OCI-LY7 (cell line): ENCODE measurements at regions of chr11 and their contacts with region 1.

Region 1: GRCh38 chr11:44611687-44612434 is 46.4 kb downstream of the CD82 start:
- DNase-seq: peak; percentile 23
- H3K4me3 ChIP-seq: no peak overlapping the region
- H3K27ac ChIP-seq: no peak overlapping the region
- H3K4me1 ChIP-seq: peaks cover 51% of the 10 kb centered on the region
- CTCF ChIP-seq: no peak

Region 2: GRCh38 chr11:44483919-44484610 is 127.8 kb before region 1 on chr11:
- CTCF ChIA-PET with region 1: no interaction called
- POLR2A ChIA-PET with region 1: no interaction called
- intact Hi-C with region 1: no loop called
- DNase-seq: peak; percentile 1
- H3K4me3 ChIP-seq: no peak overlapping the region
- H3K27ac ChIP-seq: no peak overlapping the region
- H3K4me1 ChIP-seq: no peaks in the 10 kb centered on the region
- CTCF ChIP-seq: peak; percentile 51; the same call in 1 of the 2 replicates

Region 3: DNA sequence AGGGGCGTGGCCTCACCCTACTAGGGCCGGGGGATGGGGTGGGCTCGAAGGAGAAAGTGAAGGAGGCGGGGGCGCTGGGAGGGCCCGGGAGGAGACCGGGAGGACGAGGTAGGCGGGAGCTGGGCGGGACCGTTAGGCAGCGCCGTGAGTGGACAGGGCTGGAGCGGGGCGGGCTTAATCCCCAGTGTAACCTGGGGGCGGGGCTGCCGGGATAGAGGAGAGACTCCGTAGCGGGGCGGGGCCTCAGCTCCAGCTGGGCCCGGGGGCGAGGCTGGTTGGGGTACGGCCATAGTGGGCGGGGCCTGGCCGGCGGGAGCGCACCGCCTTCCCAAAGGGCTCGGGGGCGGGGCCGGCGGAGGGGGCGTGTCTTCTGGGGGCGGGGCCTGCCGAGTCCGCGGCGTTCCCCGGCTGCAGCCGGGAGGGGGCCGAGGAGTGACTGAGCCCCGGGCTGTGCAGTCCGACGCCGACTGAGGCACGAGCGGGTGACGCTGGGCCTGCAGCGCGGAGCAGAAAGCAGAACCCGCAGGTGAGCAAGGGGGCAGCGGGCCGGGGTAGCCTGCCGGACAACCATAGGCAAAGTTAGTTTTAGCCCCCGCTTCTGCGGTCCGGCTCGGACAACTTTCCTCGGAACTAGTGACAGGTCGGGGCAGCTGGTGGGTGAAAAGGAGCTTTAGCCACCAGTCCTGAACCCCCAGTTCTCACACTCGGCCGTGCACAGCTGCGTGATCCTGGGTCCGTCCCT is 46.5 kb before region 1 on chr11 and contains the start of gene CD82:
- CTCF ChIA-PET with region 1: interaction called, 5 read pairs
- POLR2A ChIA-PET with region 1: interaction called, 18 read pairs
- intact Hi-C with region 1: no loop called
- DNase-seq: peak; percentile 97
- H3K4me3 ChIP-seq: peak within 1 kb of the TSS; percentile 70
- H3K27ac ChIP-seq: no peak within 1 kb of the TSS
- H3K4me1 ChIP-seq: peaks cover 36% of the 10 kb centered on the region
- CTCF ChIP-seq: peak; percentile 41
- total RNA-seq, gene CD82: 1.2 and 1.8 TPM in 2 replicates